Gastrocnemius medialis (tissue), 4 donors: ENCODE measurements at regions of chr12 and their contacts with region 1.

Region 1: DNA sequence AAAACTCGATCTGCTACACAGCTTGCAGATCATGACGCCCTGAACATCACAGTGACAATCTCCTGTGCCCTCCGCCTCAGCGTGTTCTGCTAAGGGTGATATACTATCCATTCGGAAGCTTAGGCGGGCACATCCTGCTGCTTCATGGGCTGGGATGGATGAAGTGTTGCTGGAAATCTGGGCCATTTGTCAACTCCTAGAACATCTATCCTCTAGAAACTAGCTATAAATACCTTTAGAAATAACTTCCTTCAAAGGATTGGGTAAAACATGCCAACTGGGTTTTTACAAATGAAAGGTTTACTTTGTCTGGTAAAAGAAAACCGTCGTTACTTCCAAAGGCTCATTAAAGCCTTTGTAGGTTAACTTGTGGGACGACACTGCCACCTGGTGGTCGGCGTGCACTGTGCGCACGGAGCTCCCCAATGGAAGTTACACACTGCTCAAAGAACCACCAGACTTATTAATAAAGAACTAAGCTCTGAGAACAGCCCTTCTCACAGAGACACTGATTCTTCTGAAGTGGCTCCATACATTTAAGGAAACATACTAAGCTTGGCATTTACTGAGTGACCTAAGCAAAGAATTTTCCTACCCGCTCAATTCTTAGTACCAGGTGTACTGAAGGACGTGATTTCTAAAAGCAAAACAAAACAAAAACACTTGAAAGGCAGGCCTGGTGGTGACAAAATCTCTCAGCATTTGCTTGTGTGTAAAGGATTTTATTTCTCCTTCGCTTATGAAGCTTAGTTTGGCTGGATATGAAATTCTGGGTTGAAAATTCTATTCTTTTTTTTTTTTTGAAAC is 21.6 kb upstream of the CACNA2D4 start:
- DNase-seq: peak; percentile 57 to 76
- ATAC-seq: peak; percentile 63 to 85
- H3K4me3 ChIP-seq: peak overlapping the region in 1 of 4 donors; percentile 4
- H3K27ac ChIP-seq: peak overlapping the region in 1 of 4 donors; percentile 24
- H3K4me1 ChIP-seq: peaks cover 20 to 25% of the 10 kb centered on the region in 2 donors
- H3K27me3 ChIP-seq: no peaks in the 10 kb centered on the region
- CTCF ChIP-seq: peak; percentile 95 to 98 (median 96)
- POLR2A ChIP-seq: no peak

Region 2: DNA sequence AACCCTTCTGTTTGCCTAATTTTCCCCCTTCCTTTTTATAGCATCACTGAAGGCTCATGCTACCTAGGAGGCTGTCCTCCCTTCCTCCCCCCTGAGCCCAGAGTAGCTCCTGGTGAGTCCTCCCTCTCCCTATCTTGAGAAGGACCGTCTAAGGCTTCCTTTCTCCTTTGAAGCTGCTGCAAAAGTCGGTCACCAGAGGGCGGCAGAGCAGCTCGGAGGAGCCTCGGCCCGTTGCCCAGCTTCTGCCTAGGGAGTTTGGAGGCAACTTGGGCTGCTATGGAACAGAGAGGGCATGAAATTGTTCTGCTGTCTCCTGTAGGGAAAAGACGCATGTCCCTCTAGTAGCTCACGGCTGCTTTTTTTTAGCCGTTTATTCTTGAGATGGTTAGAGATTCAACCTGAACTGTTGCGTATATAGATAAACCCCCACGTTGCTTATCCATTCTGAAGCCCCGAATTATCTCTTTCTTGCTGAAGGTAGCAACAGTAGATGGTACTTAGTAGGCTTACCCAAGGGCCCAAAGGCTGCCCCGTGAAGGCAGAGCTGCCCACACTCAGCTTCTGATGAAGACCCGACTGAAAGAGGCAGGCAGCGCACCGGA is 305.3 kb before region 1 on chr12:
- in situ Hi-C with region 1: no loop called
- intact Hi-C with region 1: loop called (anchors 1 kb)
- DNase-seq: peak; percentile 40 to 61
- ATAC-seq: peak; percentile 61 to 67
- H3K4me3 ChIP-seq: no peak overlapping the region
- H3K27ac ChIP-seq: no peak overlapping the region
- H3K4me1 ChIP-seq: peaks cover 9 to 11% of the 10 kb centered on the region in 2 donors
- H3K27me3 ChIP-seq: peaks cover 21 to 31% (median 23%) of the 10 kb centered on the region in 3 donors
- CTCF ChIP-seq: peak; percentile 51 to 88 (median 65)
- POLR2A ChIP-seq: no peak

Region 3: GRCh38 chr12:1644534-1645438 is 295.2 kb before region 1 on chr12:
- in situ Hi-C with region 1: loop called in 1 of 4 experiments (anchors 5 kb)
- intact Hi-C with region 1: no loop called
- DNase-seq: peak; percentile 38 to 52
- ATAC-seq: peak in 1 of 2 donors; percentile 47
- H3K4me3 ChIP-seq: no peak overlapping the region
- H3K27ac ChIP-seq: no peak overlapping the region
- H3K4me1 ChIP-seq: peaks cover 3 to 7% of the 10 kb centered on the region in 2 donors
- H3K27me3 ChIP-seq: no peaks in the 10 kb centered on the region
- CTCF ChIP-seq: no peak
- POLR2A ChIP-seq: no peak

Region 4: GRCh38 chr12:1650260-1650977 is 289.6 kb before region 1 on chr12:
- in situ Hi-C with region 1: loop called (anchors 5 kb)
- intact Hi-C with region 1: loop called (anchors 5 kb)
- DNase-seq: no peak
- ATAC-seq: no peak
- H3K4me3 ChIP-seq: no peak overlapping the region
- H3K27ac ChIP-seq: no peak overlapping the region
- H3K4me1 ChIP-seq: no peaks in the 10 kb centered on the region
- H3K27me3 ChIP-seq: no peaks in the 10 kb centered on the region
- CTCF ChIP-seq: no peak
- POLR2A ChIP-seq: no peak

Region 5: DNA sequence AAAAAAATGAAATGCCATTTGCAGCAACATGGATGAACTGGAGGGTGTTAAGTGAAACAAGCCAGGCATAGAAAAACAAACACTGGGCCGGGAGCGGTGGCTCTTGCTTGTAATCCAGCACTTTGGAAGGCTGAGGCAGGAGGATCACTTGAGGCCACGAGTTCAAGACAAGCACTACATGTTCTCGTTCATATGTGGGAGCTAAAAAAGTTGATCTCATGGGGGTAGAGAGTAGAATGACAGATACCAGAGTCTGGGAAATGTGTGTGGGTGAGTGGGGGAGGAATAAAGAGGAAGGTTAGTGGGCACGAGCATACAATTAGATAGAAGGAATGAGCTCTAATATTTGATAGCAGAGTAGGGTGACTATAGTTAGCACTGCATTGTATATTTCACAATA is 43.0 kb before region 1 on chr12:
- in situ Hi-C with region 1: no loop called
- intact Hi-C with region 1: no loop called
- DNase-seq: no peak
- ATAC-seq: no peak
- H3K4me3 ChIP-seq: no peak overlapping the region
- H3K27ac ChIP-seq: no peak overlapping the region
- H3K4me1 ChIP-seq: no peaks in the 10 kb centered on the region
- H3K27me3 ChIP-seq: no peaks in the 10 kb centered on the region
- CTCF ChIP-seq: no peak
- POLR2A ChIP-seq: no peak